CD8-positive, alpha-beta T cell (primary cell): ENCODE measurements at regions of chr5 and their contacts with region 1.

Region 1: GRCh38 chr5:65481635-65482295 is at the start of gene ADAMTS6:
- DNase-seq: peak; percentile 47 to 91 (median 80)
- ATAC-seq: peak; percentile 90
- H3K4me3 ChIP-seq: peak within 1 kb of the TSS; percentile 71 to 80
- H3K4me3 Mint-ChIP-seq: peak within 1 kb of the TSS; percentile 88
- H3K27ac ChIP-seq: peak within 1 kb of the TSS; percentile 64 to 74
- H3K27ac Mint-ChIP-seq: peak within 1 kb of the TSS; percentile 94
- H3K4me1 ChIP-seq: peaks cover 11% of the 10 kb centered on the region
- H3K4me1 Mint-ChIP-seq: peaks cover 16% of the 10 kb centered on the region
- H3K27me3 ChIP-seq: no peaks in the 10 kb centered on the region
- H3K27me3 Mint-ChIP-seq: no peaks in the 10 kb centered on the region
- CTCF ChIP-seq: no peak
- total RNA-seq, gene ADAMTS6: 4.0 to 4.3 TPM

Region 2: GRCh38 chr5:64634997-64635686 is 846.6 kb before region 1 on chr5:
- CTCF ChIA-PET with region 1: interaction called, 23 read pairs
- POLR2A ChIA-PET with region 1: no interaction called
- intact Hi-C with region 1: loop called (anchors 1 to 5 kb)
- DNase-seq: peak in 2 of 9 experiments; percentile 42 to 57
- ATAC-seq: no peak
- H3K4me3 ChIP-seq: no peak overlapping the region
- H3K4me3 Mint-ChIP-seq: no peak overlapping the region
- H3K27ac ChIP-seq: no peak overlapping the region
- H3K27ac Mint-ChIP-seq: no peak overlapping the region
- H3K4me1 ChIP-seq: no peaks in the 10 kb centered on the region
- H3K4me1 Mint-ChIP-seq: no peaks in the 10 kb centered on the region
- H3K27me3 ChIP-seq: no peaks in the 10 kb centered on the region
- H3K27me3 Mint-ChIP-seq: peaks cover 29% of the 10 kb centered on the region
- CTCF ChIP-seq: peak; percentile 97

Region 3: DNA sequence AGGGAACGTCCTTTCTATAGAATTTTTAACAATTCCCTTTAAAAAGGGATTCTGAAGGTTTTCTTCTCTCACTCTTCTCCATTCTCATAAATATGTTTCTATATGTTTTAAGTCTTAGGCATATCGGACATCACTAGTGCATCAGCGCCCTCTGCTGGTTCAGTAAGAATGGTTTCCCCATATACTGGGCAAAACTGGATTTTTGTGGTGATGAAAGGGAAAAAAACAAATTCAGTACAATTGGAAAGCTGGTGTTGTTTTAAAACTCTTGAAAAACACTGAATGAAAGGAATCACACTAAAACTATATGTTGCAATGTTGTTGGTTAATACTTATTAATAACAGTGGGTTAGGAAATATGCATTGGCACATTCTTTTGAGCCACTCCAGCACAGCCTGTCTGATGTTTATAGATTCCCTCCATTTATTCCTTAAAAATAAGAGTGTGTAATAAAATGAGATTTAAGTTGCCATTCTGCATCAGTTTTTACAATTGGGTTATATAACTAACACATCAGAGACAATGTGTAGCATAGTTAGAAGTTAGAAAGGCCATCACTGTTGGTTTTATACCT is 697.2 kb before region 1 on chr5:
- CTCF ChIA-PET with region 1: interaction called, 4 read pairs
- POLR2A ChIA-PET with region 1: no interaction called
- intact Hi-C with region 1: loop called in 1 of 2 experiments (anchors 1 kb)
- DNase-seq: peak; percentile 33 to 86 (median 75)
- ATAC-seq: peak; percentile 80
- H3K4me3 ChIP-seq: no peak overlapping the region
- H3K4me3 Mint-ChIP-seq: no peak overlapping the region
- H3K27ac ChIP-seq: no peak overlapping the region
- H3K27ac Mint-ChIP-seq: no peak overlapping the region
- H3K4me1 ChIP-seq: no peaks in the 10 kb centered on the region
- H3K4me1 Mint-ChIP-seq: peaks cover 8% of the 10 kb centered on the region
- H3K27me3 ChIP-seq: no peaks in the 10 kb centered on the region
- H3K27me3 Mint-ChIP-seq: no peaks in the 10 kb centered on the region
- CTCF ChIP-seq: peak; percentile 91

Region 4: DNA sequence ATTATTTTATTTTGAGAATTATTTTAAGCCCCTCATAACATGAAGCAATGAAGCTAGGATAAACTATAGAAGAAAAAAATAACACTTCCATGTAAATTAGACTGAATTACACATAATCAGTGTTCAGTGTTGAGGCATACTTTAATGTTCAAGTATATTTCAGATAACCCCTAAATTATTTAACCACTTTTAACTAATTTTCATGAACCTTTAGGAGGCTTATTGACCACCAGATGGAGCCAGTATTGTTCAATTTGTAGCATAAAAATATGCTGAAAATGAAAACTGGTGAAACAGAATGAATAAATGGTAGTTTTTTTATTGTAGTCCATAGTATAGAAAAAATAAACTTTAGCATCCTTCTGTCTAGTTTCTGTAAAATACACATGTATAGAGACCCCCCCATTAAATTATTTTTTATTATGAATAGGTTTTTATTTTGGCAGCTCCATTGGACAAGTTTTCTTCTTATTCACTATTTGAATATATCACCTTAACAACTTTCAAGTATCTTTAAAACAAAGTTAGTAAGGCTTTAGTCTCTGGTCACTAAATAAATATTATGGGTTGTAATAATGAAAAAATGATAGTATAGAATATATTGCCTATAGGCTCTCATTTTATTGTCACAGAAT is 522.9 kb before region 1 on chr5:
- CTCF ChIA-PET with region 1: interaction called, 10 read pairs
- POLR2A ChIA-PET with region 1: interaction called, 3 read pairs
- intact Hi-C with region 1: loop called (anchors 1 kb)
- DNase-seq: peak in 2 of 9 experiments; percentile 35 to 53
- ATAC-seq: no peak
- H3K4me3 ChIP-seq: no peak overlapping the region
- H3K4me3 Mint-ChIP-seq: no peak overlapping the region
- H3K27ac ChIP-seq: no peak overlapping the region
- H3K27ac Mint-ChIP-seq: no peak overlapping the region
- H3K4me1 ChIP-seq: no peaks in the 10 kb centered on the region
- H3K4me1 Mint-ChIP-seq: no peaks in the 10 kb centered on the region
- H3K27me3 ChIP-seq: no peaks in the 10 kb centered on the region
- H3K27me3 Mint-ChIP-seq: no peaks in the 10 kb centered on the region
- CTCF ChIP-seq: peak; percentile 67

Region 5: DNA sequence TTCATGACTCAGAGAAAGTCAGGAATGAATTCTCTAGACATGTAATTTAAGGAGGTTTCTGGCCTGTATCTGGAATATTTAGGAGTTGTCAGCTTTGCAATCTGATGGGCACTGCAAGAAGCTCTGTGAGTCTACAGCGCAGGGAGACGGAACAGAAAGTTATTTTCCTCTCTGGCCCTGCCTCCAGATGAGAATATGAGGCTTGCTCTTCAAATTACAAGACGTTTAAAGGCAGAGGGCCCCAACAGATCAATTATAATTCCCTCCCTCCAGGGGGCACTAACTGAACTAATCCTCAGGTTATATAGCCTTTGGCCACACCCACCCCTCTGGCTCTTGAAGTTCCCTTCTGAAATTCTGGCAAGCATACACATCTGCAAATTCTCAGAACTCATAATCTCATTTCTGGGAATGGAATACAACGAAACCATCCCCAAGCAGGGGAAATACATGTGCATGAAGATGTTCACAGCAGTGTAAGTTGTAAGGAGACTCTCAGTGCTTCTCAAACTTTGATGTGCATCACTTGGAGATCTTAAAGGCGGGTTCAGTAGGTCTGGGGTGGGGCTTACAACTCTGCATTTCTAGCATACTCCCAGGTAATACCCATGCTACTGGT is 405.4 kb before region 1 on chr5:
- CTCF ChIA-PET with region 1: interaction called, 11 read pairs
- POLR2A ChIA-PET with region 1: no interaction called
- intact Hi-C with region 1: loop called (anchors 1 to 2 kb)
- DNase-seq: peak in 8 of 9 experiments; percentile 21 to 81 (median 55)
- ATAC-seq: peak; percentile 97
- H3K4me3 ChIP-seq: no peak overlapping the region
- H3K4me3 Mint-ChIP-seq: no peak overlapping the region
- H3K27ac ChIP-seq: no peak overlapping the region
- H3K27ac Mint-ChIP-seq: no peak overlapping the region
- H3K4me1 ChIP-seq: no peaks in the 10 kb centered on the region
- H3K4me1 Mint-ChIP-seq: peaks cover 5% of the 10 kb centered on the region
- H3K27me3 ChIP-seq: no peaks in the 10 kb centered on the region
- H3K27me3 Mint-ChIP-seq: no peaks in the 10 kb centered on the region
- CTCF ChIP-seq: peak; percentile 55

Region 6: GRCh38 chr5:65562731-65563701 is 81.3 kb after region 1 on chr5 and contains the starts of genes CENPK and PPWD1:
- CTCF ChIA-PET with region 1: interaction called, 4 read pairs
- POLR2A ChIA-PET with region 1: interaction called, 13 read pairs
- intact Hi-C with region 1: loop called (anchors 5 kb)
- DNase-seq: peak; percentile 83 to 98 (median 95)
- ATAC-seq: peak; percentile 97
- H3K4me3 ChIP-seq: peak within 1 kb of the TSS; percentile 74 to 82
- H3K4me3 Mint-ChIP-seq: peak within 1 kb of the TSS; percentile 100
- H3K27ac ChIP-seq: peak within 1 kb of the TSS; percentile 97 to 98
- H3K27ac Mint-ChIP-seq: peak within 1 kb of the TSS; percentile 100
- H3K4me1 ChIP-seq: peaks cover 37% of the 10 kb centered on the region
- H3K4me1 Mint-ChIP-seq: peaks cover 42% of the 10 kb centered on the region
- H3K27me3 ChIP-seq: no peaks in the 10 kb centered on the region
- H3K27me3 Mint-ChIP-seq: no peaks in the 10 kb centered on the region
- CTCF ChIP-seq: no peak
- total RNA-seq, gene CENPK: 5.1 to 5.3 TPM
- total RNA-seq, gene PPWD1: 78.8 to 81.5 TPM